WTC11 (cell line): ENCODE measurements at regions of chr19 and their contacts with region 1.

Region 1: DNA sequence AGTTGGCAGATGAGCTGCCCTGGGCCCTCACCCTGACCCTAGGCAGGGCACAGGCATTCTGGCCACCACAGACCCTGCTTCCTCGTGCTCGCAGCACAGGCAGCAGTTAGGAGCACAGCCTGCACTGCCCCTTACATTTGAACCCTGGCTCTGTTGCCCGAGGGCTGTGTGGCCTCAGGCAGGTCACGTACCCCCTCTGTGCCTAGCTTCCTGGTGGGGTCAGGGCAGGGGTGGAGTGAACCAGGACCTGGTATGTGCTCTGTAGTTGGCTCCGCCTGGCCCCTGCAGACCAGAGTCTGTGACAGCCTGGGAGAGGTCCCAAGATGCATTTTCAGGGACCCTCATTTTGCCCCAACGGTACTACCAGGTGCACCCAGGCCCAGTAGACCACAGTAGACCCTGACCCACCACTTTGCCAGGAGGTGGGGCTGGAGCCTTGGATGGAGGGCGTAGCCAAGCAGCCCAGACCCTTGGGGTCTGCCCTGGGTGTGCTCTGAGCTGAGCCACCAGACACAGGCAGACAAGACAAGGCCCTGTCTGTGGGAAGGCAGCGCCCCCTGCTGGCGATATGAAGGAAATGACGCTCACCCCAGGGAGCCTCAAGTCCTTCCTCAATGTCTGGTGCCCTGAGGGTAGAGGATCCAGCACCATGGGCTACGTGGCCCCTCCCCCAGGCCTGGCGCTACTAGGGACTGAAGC is 9.1 kb downstream of the LYL1 start:
- DNase-seq: peak; percentile 84
- ATAC-seq: peak; percentile 41
- H3K4me3 Mint-ChIP-seq: no peak overlapping the region; the same call in 1 of the 2 replicates
- H3K27ac Mint-ChIP-seq: no peak overlapping the region
- H3K4me1 Mint-ChIP-seq: peaks cover 39% of the 10 kb centered on the region
- H3K27me3 Mint-ChIP-seq: peaks cover 52% of the 10 kb centered on the region
- CTCF ChIP-seq: peak; percentile 100

Region 2: GRCh38 chr19:12974301-12975220 is 119.0 kb before region 1 on chr19:
- CTCF ChIA-PET with region 1: interaction called, 276 read pairs
- POLR2A ChIA-PET with region 1: interaction called, 6 read pairs
- DNase-seq: no peak
- ATAC-seq: no peak
- H3K4me3 Mint-ChIP-seq: no peak overlapping the region
- H3K27ac Mint-ChIP-seq: no peak overlapping the region
- H3K4me1 Mint-ChIP-seq: no peaks in the 10 kb centered on the region
- H3K27me3 Mint-ChIP-seq: peaks cover 5% of the 10 kb centered on the region
- CTCF ChIP-seq: no peak

Region 3: GRCh38 chr19:13002166-13002898 is 91.2 kb before region 1 on chr19:
- CTCF ChIA-PET with region 1: interaction called, 13 read pairs
- POLR2A ChIA-PET with region 1: no interaction called
- DNase-seq: no peak
- ATAC-seq: no peak
- H3K4me3 Mint-ChIP-seq: no peak overlapping the region
- H3K27ac Mint-ChIP-seq: no peak overlapping the region
- H3K4me1 Mint-ChIP-seq: no peaks in the 10 kb centered on the region
- H3K27me3 Mint-ChIP-seq: peaks cover 88% of the 10 kb centered on the region
- CTCF ChIP-seq: no peak

Region 4: DNA sequence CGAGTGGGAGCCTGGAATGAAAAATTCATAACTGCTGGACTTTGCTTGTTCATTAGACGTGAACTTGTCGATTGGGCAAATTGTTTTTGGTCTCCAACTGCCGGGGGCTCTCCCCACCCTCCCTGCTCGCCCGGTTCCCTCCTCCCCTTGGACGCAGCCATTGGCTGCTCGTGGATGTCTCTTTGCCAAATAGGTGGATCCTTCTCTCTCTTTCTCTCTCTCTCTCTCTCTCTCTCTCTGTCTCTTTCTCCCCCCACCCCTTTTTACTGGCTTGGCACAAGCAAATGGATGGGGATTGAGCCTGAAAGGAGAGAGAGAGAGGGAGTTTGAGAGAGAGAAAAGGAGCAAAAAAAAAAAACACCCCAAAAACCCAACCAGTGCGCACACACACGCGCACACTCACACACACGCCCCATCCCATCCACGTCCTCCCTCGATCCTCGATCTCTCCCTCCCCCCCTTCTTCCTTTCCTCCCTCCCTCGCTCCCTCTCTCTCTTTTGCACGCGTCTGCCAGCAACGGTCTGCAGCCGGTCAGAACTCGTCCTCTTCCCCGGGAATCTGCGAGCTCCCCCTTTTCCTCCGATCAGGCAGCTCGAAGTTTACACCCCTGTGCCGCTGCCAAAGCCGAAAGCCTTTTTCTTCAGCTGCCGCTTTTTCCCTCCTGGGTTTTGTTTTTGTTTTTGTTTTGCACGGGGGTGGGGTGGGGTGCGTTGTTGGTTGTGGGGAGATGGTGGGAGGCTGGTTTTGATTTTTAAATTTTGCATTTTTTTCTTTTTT is 70.5 kb before region 1 on chr19:
- CTCF ChIA-PET with region 1: interaction called, 110 read pairs
- POLR2A ChIA-PET with region 1: interaction called, 5 read pairs
- DNase-seq: peak; percentile 61
- ATAC-seq: 0 out of 2 replicates have a peak, but pooled peaks have one; percentile 6
- H3K4me3 Mint-ChIP-seq: peak overlapping the region; percentile 57
- H3K27ac Mint-ChIP-seq: no peak overlapping the region
- H3K4me1 Mint-ChIP-seq: peaks cover 71% of the 10 kb centered on the region
- H3K27me3 Mint-ChIP-seq: peaks cover 100% of the 10 kb centered on the region
- CTCF ChIP-seq: no peak

Region 5: GRCh38 chr19:13060964-13061927 is 32.3 kb before region 1 on chr19:
- CTCF ChIA-PET with region 1: interaction called, 177 read pairs
- POLR2A ChIA-PET with region 1: interaction called, 3 read pairs
- DNase-seq: peak; percentile 93
- ATAC-seq: peak; percentile 85
- H3K4me3 Mint-ChIP-seq: peak overlapping the region; percentile 64
- H3K27ac Mint-ChIP-seq: no peak overlapping the region
- H3K4me1 Mint-ChIP-seq: peaks cover 26% of the 10 kb centered on the region
- H3K27me3 Mint-ChIP-seq: peaks cover 76% of the 10 kb centered on the region
- CTCF ChIP-seq: peak; percentile 76

Region 6: DNA sequence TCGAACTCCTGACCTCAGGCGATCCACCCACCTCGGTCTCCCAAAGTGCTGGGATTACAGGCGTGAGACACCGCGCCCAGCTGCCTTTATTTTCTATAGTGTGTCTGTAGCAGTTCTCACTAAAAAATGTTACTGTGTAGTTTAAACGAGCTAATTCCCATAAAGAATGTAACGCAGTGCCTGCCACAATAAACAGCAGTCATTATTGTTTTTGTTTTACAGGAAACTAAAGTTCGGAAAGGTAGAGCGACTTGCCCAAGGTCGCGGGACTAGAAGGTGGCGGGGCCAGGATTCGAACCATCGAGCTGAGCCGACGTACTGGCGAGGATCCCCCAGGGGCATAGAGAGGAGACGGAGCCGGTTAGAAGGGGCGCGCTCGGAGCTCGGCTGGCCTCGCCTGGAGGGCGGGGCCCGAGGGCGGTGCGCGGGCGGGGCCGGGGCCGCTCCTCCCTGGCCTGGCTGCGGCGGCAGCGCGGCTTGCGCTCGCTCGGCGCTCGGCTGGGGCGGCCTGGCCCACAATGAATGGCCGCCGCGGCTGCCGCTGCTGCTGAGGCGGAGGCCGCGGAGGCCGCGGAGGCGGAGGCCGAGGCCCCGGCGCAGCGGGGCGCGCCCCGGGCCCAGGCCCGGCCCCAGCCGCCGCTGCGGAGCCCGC is 24.3 kb after region 1 on chr19 and contains the start of gene NACC1:
- CTCF ChIA-PET with region 1: interaction called, 16 read pairs
- POLR2A ChIA-PET with region 1: no interaction called
- DNase-seq: peak; percentile 93
- ATAC-seq: peak; percentile 68
- H3K4me3 Mint-ChIP-seq: peak within 1 kb of the TSS; percentile 96
- H3K27ac Mint-ChIP-seq: peak within 1 kb of the TSS; percentile 98
- H3K4me1 Mint-ChIP-seq: peaks cover 52% of the 10 kb centered on the region
- H3K27me3 Mint-ChIP-seq: no peaks in the 10 kb centered on the region; the same call in 1 of the 2 replicates
- CTCF ChIP-seq: no peak
- total RNA-seq, gene NACC1: 212 to 237 TPM (median 213 TPM) in 3 replicates

Region 7: DNA sequence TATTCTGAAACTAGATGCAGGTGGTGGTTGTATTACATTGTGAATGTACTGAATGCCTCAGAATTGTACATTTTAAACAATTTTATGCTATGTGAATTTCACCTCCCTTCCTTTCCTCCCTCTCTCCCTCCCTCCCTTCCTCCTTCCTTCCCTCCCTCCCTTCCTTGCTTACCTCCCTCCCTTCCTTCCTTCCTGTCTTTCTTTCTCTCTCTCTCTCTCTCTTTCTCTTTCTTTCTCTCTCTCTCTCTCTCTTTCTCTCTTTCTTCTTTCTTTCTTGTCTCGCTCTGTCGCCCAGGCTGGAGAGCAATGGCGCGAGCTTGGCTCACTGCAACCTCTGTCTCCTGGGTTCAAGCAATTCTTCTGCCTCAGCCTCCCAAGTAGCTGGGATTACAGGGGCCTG is 93.9 kb after region 1 on chr19:
- CTCF ChIA-PET with region 1: no interaction called
- POLR2A ChIA-PET with region 1: no interaction called
- DNase-seq: no peak
- ATAC-seq: no peak
- H3K4me3 Mint-ChIP-seq: no peak overlapping the region
- H3K27ac Mint-ChIP-seq: no peak overlapping the region
- H3K4me1 Mint-ChIP-seq: peaks cover 4% of the 10 kb centered on the region; the same call in 1 of the 2 replicates
- H3K27me3 Mint-ChIP-seq: no peaks in the 10 kb centered on the region
- CTCF ChIP-seq: no peak